Adrenal gland (tissue), 19 donors: ENCODE measurements at regions of chr1 and their contacts with region 1.

Region 1: GRCh38 chr1:155308493-155309422 is at the start of gene FDPS:
- DNase-seq: peak; percentile 98 to 100 (median 99)
- H3K4me3 ChIP-seq: peak within 1 kb of the TSS; percentile 51 to 79 (median 63)
- H3K27ac ChIP-seq: peak within 1 kb of the TSS; percentile 79 to 95 (median 89)
- H3K4me1 ChIP-seq: peaks cover 9 to 33% of the 10 kb centered on the region in 2 donors
- H3K27me3 ChIP-seq: no peaks in the 10 kb centered on the region
- CTCF ChIP-seq: peak in 5 of 6 experiments; percentile 16 to 46 (median 35)
- POLR2A ChIP-seq: peak; percentile 72 to 87
- total RNA-seq, gene FDPS: 107 to 2,334 (median 186) TPM

Region 2: GRCh38 chr1:154936555-154937084 is 372.1 kb before region 1 on chr1 and contains the start of gene PMVK:
- intact Hi-C with region 1: no loop called
- DNase-seq: peak; percentile 97 to 98 (median 97)
- H3K4me3 ChIP-seq: peak within 1 kb of the TSS; percentile 23 to 69 (median 63)
- H3K27ac ChIP-seq: peak within 1 kb of the TSS; percentile 84 to 99 (median 97)
- H3K4me1 ChIP-seq: peaks cover 24 to 42% of the 10 kb centered on the region in 2 donors
- H3K27me3 ChIP-seq: no peaks in the 10 kb centered on the region
- CTCF ChIP-seq: peak in 4 of 6 experiments; percentile 2 to 35 (median 24)
- POLR2A ChIP-seq: peak; percentile 54 to 75
- total RNA-seq, gene PMVK: 12.6 to 70.0 (median 31.0) TPM

Region 3: GRCh38 chr1:155208541-155209311 is 100.0 kb before region 1 on chr1 and contains the start of gene MTX1:
- intact Hi-C with region 1: no loop called
- DNase-seq: peak; percentile 84 to 93 (median 87)
- H3K4me3 ChIP-seq: peak within 1 kb of the TSS; percentile 55 to 94 (median 84)
- H3K27ac ChIP-seq: peak within 1 kb of the TSS; percentile 80 to 98 (median 89)
- H3K4me1 ChIP-seq: peaks cover 24 to 30% of the 10 kb centered on the region in 2 donors
- H3K27me3 ChIP-seq: no peaks in the 10 kb centered on the region
- CTCF ChIP-seq: no peak
- POLR2A ChIP-seq: peak in 1 of 2 donors; percentile 25
- total RNA-seq, gene MTX1: 39.2 to 83.8 (median 45.6) TPM

Region 4: DNA sequence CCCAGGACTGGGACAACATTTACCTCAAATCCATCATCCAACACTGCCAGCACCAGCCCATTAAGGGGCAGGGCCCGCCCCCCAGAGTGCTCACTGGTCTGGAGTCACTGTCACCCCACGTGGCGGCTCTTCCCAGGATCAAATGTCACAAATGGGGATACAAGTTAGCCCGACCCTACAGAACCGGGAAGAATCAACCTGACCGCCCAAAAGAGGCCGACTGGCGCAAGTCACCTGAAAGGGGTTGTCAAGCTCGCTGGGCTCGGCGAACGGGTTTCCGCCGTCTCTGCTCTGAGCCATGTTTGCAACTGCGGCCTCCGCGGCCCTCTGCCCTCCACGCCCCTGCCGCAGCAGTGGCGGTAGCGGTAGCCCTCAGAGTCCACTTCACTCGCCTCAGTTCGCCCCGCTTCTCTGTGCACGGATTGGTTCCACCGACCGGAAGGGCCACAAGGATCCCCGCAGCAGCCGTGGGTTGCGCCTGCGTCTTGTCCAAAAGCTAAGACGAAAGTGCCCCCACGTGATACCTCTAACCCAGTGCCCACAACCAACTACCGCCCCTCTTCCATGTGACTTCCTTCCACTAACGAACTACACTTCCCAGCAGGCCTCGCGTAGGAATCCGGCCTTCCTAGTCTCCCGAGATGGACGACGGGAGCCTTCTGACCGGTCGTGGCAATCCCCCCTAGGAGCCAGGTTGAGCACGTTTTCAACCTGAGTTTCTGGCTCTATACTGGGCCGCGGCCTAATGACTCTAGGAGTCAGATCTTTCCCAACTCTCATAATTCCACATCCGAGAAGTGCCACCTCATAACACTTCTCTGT is 46.7 kb before region 1 on chr1 and contains the start of gene SCAMP3:
- intact Hi-C with region 1: loop called in 1 of 2 experiments (anchors 5 kb)
- DNase-seq: peak; percentile 94 to 99 (median 99)
- H3K4me3 ChIP-seq: peak within 1 kb of the TSS; percentile 36 to 80 (median 70)
- H3K27ac ChIP-seq: peak within 1 kb of the TSS; percentile 22 to 90 (median 80)
- H3K4me1 ChIP-seq: peaks cover 13 to 16% of the 10 kb centered on the region in 2 donors
- H3K27me3 ChIP-seq: no peaks in the 10 kb centered on the region
- CTCF ChIP-seq: peak in 2 of 6 experiments; percentile 2 to 19
- POLR2A ChIP-seq: peak; percentile 79 to 95
- total RNA-seq, gene SCAMP3: 51.0 to 143 (median 98.6) TPM